GM12878 (cell line): ENCODE measurements at regions of chr16 and their contacts with region 1.

Region 1: GRCh38 chr16:57091975-57092785 is at the start of gene CPNE2:
- DNase-seq: no peak
- ATAC-seq: peak; percentile 68
- H3K4me3 ChIP-seq: peak within 1 kb of the TSS; percentile 66
- H3K27ac ChIP-seq: no peak within 1 kb of the TSS
- H3K4me1 ChIP-seq: no peaks in the 10 kb centered on the region; the same call in none of the 2 replicates
- H3K27me3 ChIP-seq: peaks cover 0 to 11% of the 10 kb centered on the region in 2 experiments; a peak in 3 of 4 replicates
- CTCF ChIP-seq: no peak; a peak in 1 of 6 replicates
- EP300 ChIP-seq: no peak
- POLR2A ChIP-seq: no peak; the same call in 1 of the 2 replicates
- RAD21 ChIP-seq: no peak
- polyA plus RNA-seq, gene CPNE2: 4.8 to 5.6 TPM

Region 2: DNA sequence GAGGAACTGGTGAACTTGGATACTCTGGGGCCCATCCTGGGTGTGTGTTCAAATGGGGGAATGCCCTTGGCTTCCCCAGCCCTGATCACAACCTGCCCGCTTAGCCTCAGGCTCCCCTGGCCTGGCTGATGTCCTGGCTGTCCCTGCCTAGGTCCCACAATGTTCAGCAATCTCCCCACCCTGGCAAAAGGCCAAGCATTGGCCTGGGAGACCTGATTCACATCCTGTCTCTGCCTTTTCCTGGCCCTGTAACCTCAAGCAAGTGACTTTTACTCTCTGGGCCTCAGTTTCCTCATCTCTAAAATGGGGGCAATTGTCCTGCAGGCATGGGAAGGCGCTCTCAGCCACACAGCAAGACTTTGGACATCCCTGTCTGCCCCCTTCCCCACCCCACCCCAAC is 14.6 kb after region 1 on chr16:
- CTCF ChIA-PET with region 1: interaction called, 17 read pairs
- POLR2A ChIA-PET with region 1: interaction called, 3 read pairs
- RAD21 ChIA-PET with region 1: interaction called, 8 read pairs
- SMC1A ChIA-PET with region 1: interaction called, 4 read pairs
- in situ Hi-C with region 1: no loop called
- intact Hi-C with region 1: no loop called
- DNase-seq: no peak
- ATAC-seq: peak; percentile 15; the same call in 2 of the 3 replicates
- H3K4me3 ChIP-seq: no peak overlapping the region
- H3K27ac ChIP-seq: no peak overlapping the region
- H3K4me1 ChIP-seq: peaks cover 12% of the 10 kb centered on the region
- H3K27me3 ChIP-seq: no peaks in the 10 kb centered on the region
- CTCF ChIP-seq: no peak
- EP300 ChIP-seq: no peak
- POLR2A ChIP-seq: no peak
- RAD21 ChIP-seq: no peak

Region 3: GRCh38 chr16:57115514-57116182 is 23.5 kb after region 1 on chr16:
- CTCF ChIA-PET with region 1: interaction called, 15 read pairs
- POLR2A ChIA-PET with region 1: interaction called, 3 read pairs
- RAD21 ChIA-PET with region 1: interaction called, 10 read pairs
- SMC1A ChIA-PET with region 1: interaction called, 4 read pairs
- in situ Hi-C with region 1: no loop called
- intact Hi-C with region 1: no loop called
- DNase-seq: no peak
- ATAC-seq: no peak
- H3K4me3 ChIP-seq: no peak overlapping the region
- H3K27ac ChIP-seq: no peak overlapping the region
- H3K4me1 ChIP-seq: peaks cover 24% of the 10 kb centered on the region
- H3K27me3 ChIP-seq: no peaks in the 10 kb centered on the region
- CTCF ChIP-seq: no peak
- EP300 ChIP-seq: no peak
- POLR2A ChIP-seq: no peak
- RAD21 ChIP-seq: no peak

Region 4: GRCh38 chr16:57152096-57153093 is 60.2 kb after region 1 on chr16:
- CTCF ChIA-PET with region 1: interaction called, 14 read pairs
- POLR2A ChIA-PET with region 1: no interaction called
- RAD21 ChIA-PET with region 1: interaction called, 5 read pairs
- SMC1A ChIA-PET with region 1: no interaction called
- in situ Hi-C with region 1: no loop called
- intact Hi-C with region 1: no loop called
- DNase-seq: no peak
- ATAC-seq: peak; percentile 45; the same call in 2 of the 3 replicates
- H3K4me3 ChIP-seq: no peak overlapping the region
- H3K27ac ChIP-seq: no peak overlapping the region
- H3K4me1 ChIP-seq: peaks cover 12% of the 10 kb centered on the region
- H3K27me3 ChIP-seq: no peaks in the 10 kb centered on the region
- CTCF ChIP-seq: no peak
- EP300 ChIP-seq: no peak
- POLR2A ChIP-seq: no peak
- RAD21 ChIP-seq: no peak

Region 5: GRCh38 chr16:57167953-57168352 is 75.8 kb after region 1 on chr16:
- CTCF ChIA-PET with region 1: interaction called, 32 read pairs
- POLR2A ChIA-PET with region 1: interaction called, 3 read pairs
- RAD21 ChIA-PET with region 1: interaction called, 15 read pairs
- SMC1A ChIA-PET with region 1: interaction called, 6 read pairs
- in situ Hi-C with region 1: loop called (anchors 5 kb)
- intact Hi-C with region 1: loop called (anchors 2 kb)
- DNase-seq: no peak
- ATAC-seq: peak; percentile 90
- H3K4me3 ChIP-seq: no peak overlapping the region
- H3K27ac ChIP-seq: no peak overlapping the region; the same call in 1 of the 2 replicates
- H3K4me1 ChIP-seq: peaks cover 19% of the 10 kb centered on the region
- H3K27me3 ChIP-seq: no peaks in the 10 kb centered on the region
- CTCF ChIP-seq: peak; percentile 61 to 82 (median 65)
- EP300 ChIP-seq: no peak
- POLR2A ChIP-seq: no peak
- RAD21 ChIP-seq: peak; percentile 96